ENCODE measurements at regions of chr7 and their contacts with region 1.

Region 1: DNA sequence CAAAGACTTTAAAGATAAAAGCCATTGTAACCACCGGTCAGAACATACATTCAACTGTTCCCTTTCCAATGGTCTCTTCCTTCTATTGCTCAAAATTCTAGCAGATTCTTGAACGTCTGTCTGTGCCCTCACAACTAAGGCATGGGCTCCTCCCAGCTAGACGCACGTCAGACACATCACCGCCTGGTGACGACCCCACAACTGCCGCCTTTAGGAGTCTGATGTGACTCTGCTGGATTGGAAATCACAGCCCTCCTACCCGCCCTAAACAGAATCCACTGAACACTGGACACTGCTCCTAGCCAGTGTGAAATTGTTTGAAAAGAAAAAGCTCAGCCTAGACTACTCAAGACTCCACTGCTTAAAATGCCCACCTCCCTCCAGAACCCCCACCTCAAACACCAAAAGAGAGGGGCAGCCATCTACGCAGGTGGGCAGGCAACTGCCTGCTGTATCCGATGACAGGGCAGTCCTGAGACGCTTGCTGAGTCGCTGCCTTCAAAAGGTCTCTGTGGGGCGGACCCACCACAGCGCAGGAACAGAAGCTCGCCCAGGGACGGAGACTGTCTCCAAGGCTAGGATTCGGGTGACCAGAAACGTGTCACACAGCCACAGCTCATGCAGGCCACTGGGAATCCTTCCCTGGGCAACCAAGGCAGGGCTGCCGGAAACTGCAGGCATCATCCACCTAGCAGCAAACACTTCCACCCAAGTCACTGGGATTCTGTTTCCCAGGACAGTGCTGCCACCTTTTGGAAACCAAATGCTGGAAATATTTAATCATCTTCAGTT is 34.7 kb downstream of the GSDME start:
- DNase-seq: no peak
- ATAC-seq: peak; percentile 81
- H3K4me3 ChIP-seq: no peak overlapping the region
- H3K27ac ChIP-seq: no peak overlapping the region
- H3K4me1 ChIP-seq: no peaks in the 10 kb centered on the region
- H3K27me3 ChIP-seq: no peaks in the 10 kb centered on the region
- CTCF ChIP-seq: peak; percentile 71

Region 2: GRCh38 chr7:24290004-24290641 is 432.5 kb before region 1 on chr7:
- CTCF ChIA-PET with region 1: no interaction called
- POLR2A ChIA-PET with region 1: no interaction called
- in situ Hi-C with region 1: no loop called
- intact Hi-C with region 1: loop called (anchors 10 kb)
- DNase-seq: peak; percentile 36
- ATAC-seq: peak; percentile 97
- H3K4me3 ChIP-seq: no peak overlapping the region
- H3K27ac ChIP-seq: no peak overlapping the region
- H3K4me1 ChIP-seq: peaks cover 3% of the 10 kb centered on the region; the same call in 1 of the 2 replicates
- H3K27me3 ChIP-seq: peaks cover 35% of the 10 kb centered on the region
- CTCF ChIP-seq: peak; percentile 78

Region 3: GRCh38 chr7:24401628-24402593 is 320.7 kb before region 1 on chr7:
- CTCF ChIA-PET with region 1: no interaction called
- POLR2A ChIA-PET with region 1: no interaction called
- in situ Hi-C with region 1: no loop called
- intact Hi-C with region 1: loop called (anchors 2 kb)
- DNase-seq: peak; percentile 33
- ATAC-seq: peak; percentile 79
- H3K4me3 ChIP-seq: 0 out of 4 replicates have a peak overlapping the region, but pooled peaks of 1 of the 2 experiments have one; percentile 7
- H3K27ac ChIP-seq: no peak overlapping the region
- H3K4me1 ChIP-seq: no peaks in the 10 kb centered on the region
- H3K27me3 ChIP-seq: peaks cover 4% of the 10 kb centered on the region; the same call in 1 of the 2 replicates
- CTCF ChIP-seq: peak; percentile 74

Region 4: DNA sequence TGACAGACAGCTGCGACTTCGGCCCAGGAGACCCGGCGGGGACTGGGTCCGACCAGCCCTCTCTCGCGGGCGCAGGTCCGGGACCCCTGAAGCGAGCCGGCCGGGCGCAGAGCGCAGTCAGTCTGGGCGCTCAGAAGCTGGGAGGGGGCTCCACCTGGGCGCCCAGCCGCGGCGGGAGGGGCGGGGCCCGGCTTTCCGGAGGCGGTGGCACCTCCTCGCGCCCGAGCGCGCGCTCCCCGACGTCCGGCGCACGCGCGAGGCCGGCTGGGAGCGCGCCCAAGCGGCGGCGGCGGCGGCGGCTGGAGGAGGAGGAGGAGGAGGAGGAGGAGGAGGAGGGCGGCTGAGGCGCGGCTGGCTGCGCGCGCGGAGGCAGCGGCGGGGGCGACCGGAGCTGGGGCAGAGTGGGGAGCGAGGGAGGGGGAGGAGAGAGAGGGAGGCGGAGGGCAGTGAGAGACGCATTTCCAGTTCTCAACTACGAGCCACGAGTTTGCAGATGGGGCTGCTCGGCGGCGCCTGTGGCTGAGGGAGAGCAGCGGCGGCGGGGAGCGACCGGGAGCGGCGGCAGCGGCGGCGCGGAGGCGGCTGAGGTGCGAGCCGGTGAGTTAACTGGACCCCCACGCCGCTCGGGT is 149.5 kb before region 1 on chr7 and contains the start of gene PALS2:
- CTCF ChIA-PET with region 1: no interaction called
- POLR2A ChIA-PET with region 1: no interaction called
- in situ Hi-C with region 1: no loop called
- intact Hi-C with region 1: loop called (anchors 5 kb)
- DNase-seq: no peak
- ATAC-seq: peak; percentile 82
- H3K4me3 ChIP-seq: peak within 1 kb of the TSS; percentile 65 to 90
- H3K27ac ChIP-seq: peak within 1 kb of the TSS; percentile 83
- H3K4me1 ChIP-seq: peaks cover 16% of the 10 kb centered on the region
- H3K27me3 ChIP-seq: peaks cover 28% of the 10 kb centered on the region
- CTCF ChIP-seq: no peak
- total RNA-seq, gene PALS2: 48.2 TPM

Measured in Panc1 (cell line).